ENCODE measurements at regions of chr5 and their contacts with region 1.

Region 1: GRCh38 chr5:32076699-32077695 is 97.1 kb downstream of the GOLPH3 start:
- DNase-seq: peak; percentile 61
- H3K4me3 ChIP-seq: no peak overlapping the region
- H3K27ac ChIP-seq: no peak overlapping the region
- H3K4me1 ChIP-seq: no peaks in the 10 kb centered on the region; a peak in 1 of 4 replicates
- H3K27me3 ChIP-seq: no peaks in the 10 kb centered on the region
- CTCF ChIP-seq: peak; percentile 93
- EP300 ChIP-seq: no peak
- RAD21 ChIP-seq: peak; percentile 96

Region 2: DNA sequence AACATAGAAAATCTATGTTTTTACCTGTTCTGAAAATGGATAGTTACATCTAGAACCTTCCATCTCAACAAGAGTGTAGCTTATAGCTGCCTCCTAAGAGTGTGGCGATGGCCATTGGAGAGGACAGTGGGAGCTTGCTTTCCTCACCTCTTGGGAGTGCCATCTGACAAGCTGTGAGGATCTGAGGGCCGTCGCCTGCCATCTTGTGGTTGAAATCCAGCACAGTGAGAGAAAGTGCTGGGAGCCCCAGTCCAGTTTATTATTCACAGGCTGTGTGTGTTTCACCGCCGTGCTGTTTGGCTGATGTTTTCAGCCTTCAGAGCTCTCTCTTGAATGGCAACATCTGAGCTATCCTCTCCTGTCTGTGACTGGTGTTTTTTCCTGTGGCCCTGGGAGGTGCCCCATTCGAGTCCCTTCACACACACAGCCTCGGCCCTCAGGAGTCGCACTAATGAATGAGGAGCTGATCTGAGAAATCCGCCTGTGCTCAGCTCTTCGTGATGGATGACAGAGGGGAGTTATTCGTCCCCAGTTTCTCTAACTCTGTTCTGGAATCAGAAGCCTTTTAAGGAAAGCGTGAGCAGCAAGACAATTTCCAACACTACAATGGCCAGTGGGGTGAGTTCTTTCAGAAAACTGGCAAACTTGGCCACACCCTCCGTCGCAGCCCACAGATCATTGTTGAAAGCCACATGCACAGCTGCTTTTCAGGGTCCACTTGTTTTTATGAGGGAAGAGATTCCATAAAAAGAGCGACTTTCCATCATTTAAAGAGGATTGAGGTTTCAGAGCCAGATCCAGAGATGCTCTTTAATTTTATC is 267.7 kb before region 1 on chr5:
- CTCF ChIA-PET with region 1: interaction called, 24 read pairs
- POLR2A ChIA-PET with region 1: no interaction called
- DNase-seq: peak; percentile 82
- H3K4me3 ChIP-seq: no peak overlapping the region
- H3K27ac ChIP-seq: no peak overlapping the region
- H3K4me1 ChIP-seq: peaks cover 0 to 13% of the 10 kb centered on the region in 2 experiments; a peak in 1 of 4 replicates
- H3K27me3 ChIP-seq: peaks cover 5% of the 10 kb centered on the region; the same call in 1 of the 2 replicates
- CTCF ChIP-seq: peak; percentile 65
- EP300 ChIP-seq: no peak
- RAD21 ChIP-seq: peak; percentile 98

Region 3: DNA sequence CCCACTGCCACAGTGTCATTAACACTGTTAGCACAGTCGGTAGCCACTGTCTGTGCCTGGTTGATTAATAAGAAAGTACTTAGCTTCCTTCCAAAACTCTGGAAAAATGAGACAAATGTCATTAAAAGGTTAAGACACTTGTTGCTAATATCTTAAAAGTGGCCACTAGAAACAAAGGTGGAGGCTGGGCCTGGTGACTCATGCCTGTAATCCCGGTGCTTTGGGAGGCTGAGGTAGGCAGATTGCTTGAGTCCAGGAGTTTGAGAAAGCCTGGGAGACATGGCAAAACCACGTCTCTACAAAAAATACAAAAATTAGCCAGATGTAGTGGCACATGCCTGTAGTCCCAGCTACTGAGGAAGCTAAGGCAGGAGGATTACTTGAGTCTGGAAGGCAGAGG is 244.0 kb before region 1 on chr5:
- CTCF ChIA-PET with region 1: interaction called, 195 read pairs
- POLR2A ChIA-PET with region 1: no interaction called
- DNase-seq: no peak
- H3K4me3 ChIP-seq: no peak overlapping the region
- H3K27ac ChIP-seq: no peak overlapping the region
- H3K4me1 ChIP-seq: no peaks in the 10 kb centered on the region
- H3K27me3 ChIP-seq: no peaks in the 10 kb centered on the region
- CTCF ChIP-seq: no peak
- EP300 ChIP-seq: no peak
- RAD21 ChIP-seq: no peak

Region 4: DNA sequence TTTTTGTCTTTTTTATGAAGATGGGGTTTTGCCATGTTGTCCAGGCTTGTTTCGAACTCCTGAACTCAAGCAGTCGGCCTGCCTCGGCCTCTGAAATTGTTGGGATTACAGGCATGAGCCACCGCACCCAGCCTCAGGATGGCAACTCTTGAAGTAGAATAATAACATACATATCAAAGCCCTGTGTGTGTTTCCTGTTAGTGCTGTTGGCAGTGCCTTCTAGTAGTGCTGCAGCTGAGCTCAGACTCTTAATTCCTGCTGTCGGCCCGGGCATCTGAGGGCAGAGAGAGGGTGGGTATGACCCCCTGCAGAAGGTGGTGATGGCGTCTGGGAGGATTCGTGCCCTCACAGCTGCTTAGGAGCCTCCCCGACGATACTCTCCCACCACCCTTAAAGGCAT is 210.8 kb before region 1 on chr5:
- CTCF ChIA-PET with region 1: interaction called, 12 read pairs
- POLR2A ChIA-PET with region 1: no interaction called
- DNase-seq: no peak
- H3K4me3 ChIP-seq: no peak overlapping the region
- H3K27ac ChIP-seq: no peak overlapping the region
- H3K4me1 ChIP-seq: peaks cover 0 to 22% of the 10 kb centered on the region in 2 experiments; a peak in 1 of 4 replicates
- H3K27me3 ChIP-seq: no peaks in the 10 kb centered on the region; the same call in 1 of the 2 replicates
- CTCF ChIP-seq: no peak
- EP300 ChIP-seq: no peak
- RAD21 ChIP-seq: no peak

Region 5: GRCh38 chr5:31935702-31936369 is 141.2 kb before region 1 on chr5:
- CTCF ChIA-PET with region 1: interaction called, 12 read pairs
- POLR2A ChIA-PET with region 1: no interaction called
- DNase-seq: no peak
- H3K4me3 ChIP-seq: no peak overlapping the region
- H3K27ac ChIP-seq: no peak overlapping the region
- H3K4me1 ChIP-seq: peaks cover 0 to 13% of the 10 kb centered on the region in 2 experiments; a peak in 3 of 4 replicates
- H3K27me3 ChIP-seq: no peaks in the 10 kb centered on the region; the same call in 1 of the 2 replicates
- CTCF ChIP-seq: no peak
- EP300 ChIP-seq: no peak
- RAD21 ChIP-seq: no peak

Region 6: GRCh38 chr5:32066448-32066847 is 10.5 kb before region 1 on chr5:
- CTCF ChIA-PET with region 1: interaction called, 29 read pairs
- POLR2A ChIA-PET with region 1: no interaction called
- DNase-seq: no peak
- H3K4me3 ChIP-seq: no peak overlapping the region
- H3K27ac ChIP-seq: no peak overlapping the region
- H3K4me1 ChIP-seq: no peaks in the 10 kb centered on the region
- H3K27me3 ChIP-seq: no peaks in the 10 kb centered on the region; the same call in 1 of the 2 replicates
- CTCF ChIP-seq: no peak
- EP300 ChIP-seq: no peak
- RAD21 ChIP-seq: no peak

Measured in SK-N-SH (cell line).